ENCODE measurements at regions of chr2 and their contacts with region 1.

Region 1: GRCh38 chr2:173448938-173449471 is 94.3 kb downstream of the CDCA7 start:
- DNase-seq: peak; percentile 89
- H3K4me3 Mint-ChIP-seq: peak overlapping the region; percentile 64
- H3K27ac Mint-ChIP-seq: peak overlapping the region; percentile 32
- H3K4me1 Mint-ChIP-seq: peaks cover 11% of the 10 kb centered on the region
- H3K27me3 Mint-ChIP-seq: peaks cover 20% of the 10 kb centered on the region

Region 2: GRCh38 chr2:173402405-173402974 is 46.5 kb before region 1 on chr2:
- intact Hi-C with region 1: loop called (anchors 1 kb)
- DNase-seq: peak; percentile 92
- H3K4me3 Mint-ChIP-seq: no peak overlapping the region
- H3K27ac Mint-ChIP-seq: no peak overlapping the region
- H3K4me1 Mint-ChIP-seq: peaks cover 5% of the 10 kb centered on the region
- H3K27me3 Mint-ChIP-seq: peaks cover 58% of the 10 kb centered on the region

Measured in activated CD4-positive, alpha-beta T cell treated with anti-CD3 and anti-CD28 coated beads, Interleukin-2, amount 10 ng/mL, durations not matched to agents 24 days and 14 days (primary cell).